ENCODE measurements at regions of chr4 and their contacts with region 1.

Region 1: DNA sequence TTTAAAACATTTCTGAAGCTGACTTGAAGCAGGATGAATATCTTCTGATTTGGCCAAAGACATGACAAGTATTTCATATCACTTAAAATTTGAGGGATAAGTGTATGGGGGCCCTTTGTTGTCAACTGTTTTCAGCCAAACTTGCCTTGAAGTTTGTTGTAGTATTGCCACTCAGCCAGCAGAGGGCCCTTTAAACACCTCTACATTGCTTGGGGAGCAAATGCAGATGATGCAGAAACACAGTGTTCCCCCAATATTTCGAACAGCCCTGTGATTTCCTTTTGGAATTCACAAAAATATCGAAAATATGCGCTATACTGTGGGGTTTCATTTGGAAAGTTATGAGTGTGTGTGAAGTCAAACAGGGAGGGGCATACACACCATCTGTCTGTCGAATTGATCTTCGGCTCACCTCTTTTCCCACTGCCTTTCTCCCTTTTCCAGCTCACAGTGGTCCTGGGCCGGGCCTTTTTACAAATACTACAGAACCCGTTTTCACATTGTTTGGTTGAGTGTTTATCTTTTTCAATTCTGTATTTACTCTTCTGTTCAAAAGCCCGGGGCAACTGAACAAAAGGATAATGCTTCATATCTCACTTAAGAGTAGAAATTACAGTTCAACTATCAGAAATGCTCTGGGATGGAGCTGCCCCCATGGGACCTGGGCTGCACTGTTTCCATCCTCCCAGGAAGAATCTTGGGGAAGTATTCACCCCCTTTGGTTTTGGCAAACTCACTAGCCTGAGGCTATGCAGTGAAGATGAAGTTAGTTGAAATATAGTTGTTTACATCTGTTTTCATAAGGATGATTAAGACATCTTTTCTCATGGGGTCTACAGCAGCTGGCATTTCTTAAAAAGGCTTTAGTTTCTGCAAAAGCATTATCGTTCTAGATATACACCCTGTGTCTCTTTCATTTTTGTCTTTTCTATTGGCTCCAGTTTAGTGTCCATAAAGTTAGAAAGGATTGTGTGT is 137.6 kb downstream of the EGF start:
- DNase-seq: peak; percentile 38 to 53
- H3K4me3 ChIP-seq: no peak overlapping the region
- H3K27ac ChIP-seq: no peak overlapping the region
- H3K4me1 ChIP-seq: peaks cover 0 to 4% of the 10 kb centered on the region in 2 donors
- H3K27me3 ChIP-seq: no peaks in the 10 kb centered on the region
- CTCF ChIP-seq: peak; percentile 37 to 78 (median 64)
- POLR2A ChIP-seq: no peak

Region 2: GRCh38 chr4:109921384-109921808 is 128.8 kb before region 1 on chr4:
- intact Hi-C with region 1: no loop called
- DNase-seq: no peak
- H3K4me3 ChIP-seq: no peak overlapping the region
- H3K27ac ChIP-seq: no peak overlapping the region
- H3K4me1 ChIP-seq: no peaks in the 10 kb centered on the region
- H3K27me3 ChIP-seq: no peaks in the 10 kb centered on the region
- CTCF ChIP-seq: no peak
- POLR2A ChIP-seq: no peak

Region 3: DNA sequence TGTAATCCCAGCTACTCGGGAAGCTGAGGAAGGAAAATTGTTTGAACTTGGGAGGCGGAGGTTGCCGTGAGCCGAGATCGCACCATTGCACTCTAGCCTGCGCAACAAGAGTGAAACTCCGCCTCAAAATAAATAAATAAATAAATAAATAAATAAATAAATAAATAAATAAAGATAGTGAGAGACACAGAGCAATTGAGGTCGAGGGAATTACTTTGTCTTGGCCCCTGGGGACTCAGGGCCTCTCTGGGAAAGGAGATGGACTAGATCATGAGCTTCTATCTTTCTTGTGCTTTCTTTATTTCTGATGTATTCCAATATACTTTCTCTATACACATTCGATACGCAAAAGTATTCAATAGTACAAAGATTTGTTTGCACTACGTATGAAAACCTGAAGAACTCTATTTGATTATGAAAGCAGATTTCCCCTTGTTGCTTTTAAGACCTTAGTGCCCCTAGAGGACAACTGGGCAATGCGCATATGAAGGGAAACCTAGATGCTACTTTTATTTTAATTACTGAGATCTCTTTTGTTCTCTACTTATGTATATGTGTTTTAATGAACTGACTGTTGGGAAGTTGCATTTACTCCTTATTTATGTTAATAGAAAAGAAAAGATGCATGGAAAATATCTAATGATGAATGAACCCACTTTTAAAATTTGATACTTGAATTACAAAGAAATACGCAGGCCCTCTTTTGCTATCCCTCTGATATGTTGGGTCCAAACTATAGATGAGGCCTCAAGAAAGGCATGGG is 160.9 kb after region 1 on chr4:
- intact Hi-C with region 1: loop called (anchors 5 kb)
- DNase-seq: peak; percentile 29 to 33
- H3K4me3 ChIP-seq: no peak overlapping the region
- H3K27ac ChIP-seq: no peak overlapping the region
- H3K4me1 ChIP-seq: no peaks in the 10 kb centered on the region
- H3K27me3 ChIP-seq: no peaks in the 10 kb centered on the region
- CTCF ChIP-seq: peak in 5 of 6 experiments; percentile 46 to 82 (median 70)
- POLR2A ChIP-seq: no peak

Region 4: DNA sequence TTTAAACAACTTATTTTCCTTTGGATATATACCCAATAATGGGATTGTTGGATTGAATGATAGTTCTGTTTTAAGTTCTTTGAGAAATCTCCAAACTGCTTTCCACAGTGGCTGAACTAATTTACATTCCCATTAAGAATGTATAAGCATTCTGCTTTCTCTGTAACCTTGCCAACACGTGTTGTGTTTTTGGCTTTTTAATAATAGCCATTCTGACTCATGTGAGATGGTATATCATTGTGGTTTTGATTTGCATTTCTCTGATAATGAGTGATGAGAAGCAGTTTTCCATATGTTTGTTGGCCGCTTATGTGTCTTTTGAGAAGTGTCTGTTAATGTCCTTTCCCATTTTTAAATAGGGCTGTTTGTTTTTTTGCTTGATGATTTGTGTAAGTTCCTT is 728.3 kb after region 1 on chr4:
- intact Hi-C with region 1: no loop called
- DNase-seq: no peak
- H3K4me3 ChIP-seq: no peak overlapping the region
- H3K27ac ChIP-seq: no peak overlapping the region
- H3K4me1 ChIP-seq: no peaks in the 10 kb centered on the region
- H3K27me3 ChIP-seq: no peaks in the 10 kb centered on the region
- CTCF ChIP-seq: no peak
- POLR2A ChIP-seq: no peak

Measured in thyroid gland (tissue), 4 donors.